ENCODE measurements at regions of chr14 and their contacts with region 1.

Region 1: DNA sequence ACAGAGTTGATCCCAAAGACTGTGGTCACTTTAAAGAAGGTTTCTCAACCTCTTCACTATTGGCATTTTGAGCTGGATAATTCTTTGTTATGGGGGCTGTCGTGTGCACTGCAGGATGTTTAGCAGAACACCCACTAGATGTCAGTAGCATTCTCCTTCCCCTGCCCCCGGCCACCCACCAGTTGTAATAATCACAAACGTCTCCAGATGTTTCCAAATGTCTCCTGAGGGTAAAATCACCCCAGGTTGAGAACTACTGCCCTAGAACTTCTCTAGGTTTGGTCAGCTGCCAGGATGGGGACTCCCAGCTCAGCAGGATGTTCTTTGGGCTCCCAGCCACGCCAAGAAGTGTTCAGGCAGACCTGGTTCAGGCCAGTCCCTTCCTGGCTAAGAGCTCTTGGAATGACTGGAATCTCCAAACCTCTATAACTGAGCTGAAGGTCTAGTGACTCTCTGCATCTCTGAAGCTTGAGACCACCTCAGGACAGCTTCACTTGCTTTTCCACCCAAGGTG is 12.5 kb upstream of the AJUBA start:
- DNase-seq: peak; percentile 86
- H3K4me3 ChIP-seq: no peak overlapping the region
- H3K27ac ChIP-seq: peak overlapping the region; percentile 22
- H3K4me1 ChIP-seq: peaks cover 37% of the 10 kb centered on the region
- H3K27me3 ChIP-seq: no peaks in the 10 kb centered on the region
- CTCF ChIP-seq: peak; percentile 88

Region 2: GRCh38 chr14:22491683-22492621 is 502.9 kb before region 1 on chr14:
- CTCF ChIA-PET with region 1: no interaction called
- POLR2A ChIA-PET with region 1: no interaction called
- intact Hi-C with region 1: no loop called
- DNase-seq: no peak
- H3K4me3 ChIP-seq: no peak overlapping the region
- H3K27ac ChIP-seq: no peak overlapping the region
- H3K4me1 ChIP-seq: peaks cover 52% of the 10 kb centered on the region
- H3K27me3 ChIP-seq: no peaks in the 10 kb centered on the region
- CTCF ChIP-seq: no peak

Region 3: DNA sequence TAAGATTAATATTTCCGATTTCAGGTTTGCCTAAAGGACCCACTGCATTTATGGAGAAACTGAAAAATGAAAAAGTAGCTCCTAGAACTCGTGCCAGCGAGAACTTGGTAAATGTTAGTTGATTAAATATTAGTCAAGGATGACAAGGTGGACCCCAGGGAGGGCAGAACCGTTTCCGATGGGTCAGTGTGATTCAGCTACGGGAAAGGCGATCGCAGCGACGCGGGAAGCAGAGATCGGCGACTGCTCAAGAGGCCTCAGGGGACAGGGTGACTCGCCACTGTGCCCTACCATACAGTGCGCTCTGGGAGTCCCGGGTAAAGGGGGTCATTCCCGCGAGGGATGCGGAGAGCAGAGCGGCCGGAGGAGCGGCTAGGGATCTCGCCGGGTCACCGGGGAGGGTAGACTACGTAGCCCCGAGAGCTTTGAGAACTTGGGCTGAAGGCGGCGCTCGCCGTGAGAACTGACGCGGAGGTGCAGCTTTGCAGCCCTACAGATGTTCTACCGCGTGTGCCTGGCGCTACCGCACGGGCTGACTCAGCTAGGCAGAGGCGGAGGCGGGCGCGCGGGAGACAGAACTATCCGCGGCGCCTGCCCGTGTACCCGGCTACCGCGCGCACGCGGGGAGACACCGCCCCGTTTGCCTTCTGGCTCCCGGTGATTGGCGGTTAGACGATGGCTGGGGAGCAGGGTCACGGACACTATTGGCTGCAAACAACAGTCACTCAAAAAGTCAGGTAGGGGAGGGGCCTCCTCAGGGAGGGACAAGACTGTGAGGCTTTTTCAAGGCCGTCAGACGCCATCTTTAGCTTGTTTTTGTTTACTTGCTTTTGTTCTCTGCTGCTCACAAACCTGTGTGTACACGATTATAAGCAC is 12.0 kb after region 1 on chr14:
- CTCF ChIA-PET with region 1: interaction called, 17 read pairs
- POLR2A ChIA-PET with region 1: interaction called, 5 read pairs
- intact Hi-C with region 1: no loop called
- DNase-seq: peak; percentile 99
- H3K4me3 ChIP-seq: peak overlapping the region; percentile 55
- H3K27ac ChIP-seq: peak overlapping the region; percentile 91
- H3K4me1 ChIP-seq: peaks cover 30% of the 10 kb centered on the region
- H3K27me3 ChIP-seq: no peaks in the 10 kb centered on the region
- CTCF ChIP-seq: 0 out of 2 replicates have a peak, but pooled peaks have one; percentile 32

Region 4: GRCh38 chr14:23025151-23025814 is 30.5 kb after region 1 on chr14:
- CTCF ChIA-PET with region 1: interaction called, 13 read pairs
- POLR2A ChIA-PET with region 1: interaction called, 3 read pairs
- intact Hi-C with region 1: no loop called
- DNase-seq: peak; percentile 98
- H3K4me3 ChIP-seq: no peak overlapping the region
- H3K27ac ChIP-seq: peak overlapping the region; percentile 95
- H3K4me1 ChIP-seq: peaks cover 80% of the 10 kb centered on the region
- H3K27me3 ChIP-seq: no peaks in the 10 kb centered on the region
- CTCF ChIP-seq: no peak

Region 5: DNA sequence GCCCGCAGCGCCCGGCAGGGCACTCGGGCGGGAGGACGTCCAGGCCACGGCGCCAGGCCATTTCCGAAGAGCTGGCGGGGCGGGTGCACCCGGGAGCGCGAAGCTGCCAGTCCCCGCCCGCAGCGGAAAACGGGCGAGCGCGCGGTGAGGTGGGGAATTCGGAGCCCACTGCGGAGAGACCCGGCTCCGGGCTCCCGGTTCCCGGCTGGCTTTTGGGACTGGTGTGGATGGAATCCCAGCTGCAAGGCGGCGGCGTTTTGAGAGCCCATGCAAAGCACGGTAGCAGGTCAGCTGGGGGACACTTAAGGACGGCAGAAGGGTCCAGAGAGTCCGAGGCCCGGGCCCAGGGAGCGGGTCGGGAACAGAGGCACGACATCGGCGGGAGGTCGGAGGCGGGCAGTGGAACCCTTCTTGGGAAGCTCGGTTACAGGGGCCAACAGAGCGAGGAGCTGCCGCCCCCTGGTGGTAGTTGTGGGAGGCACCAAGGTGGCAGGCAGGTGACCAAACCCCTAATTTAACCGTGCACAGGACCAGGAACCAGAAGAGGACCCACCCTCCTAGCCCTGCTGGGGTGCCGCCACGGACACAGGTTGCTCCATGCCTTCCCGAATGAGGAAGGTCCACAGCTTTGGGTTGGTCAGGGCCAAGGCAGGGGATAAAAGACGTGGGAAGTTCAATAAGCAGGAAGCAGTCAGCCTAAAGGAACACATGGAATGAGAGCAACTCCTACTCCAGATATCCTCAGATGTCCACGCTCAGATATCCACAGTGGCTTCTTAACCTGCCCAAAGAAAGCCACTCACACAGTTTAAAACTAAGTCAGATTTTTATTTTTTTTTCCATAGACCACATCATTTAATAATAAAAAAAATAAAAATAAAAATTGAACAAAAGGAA is 63.2 kb after region 1 on chr14:
- CTCF ChIA-PET with region 1: interaction called, 134 read pairs
- POLR2A ChIA-PET with region 1: no interaction called
- intact Hi-C with region 1: loop called (anchors 1 kb)
- DNase-seq: peak; percentile 93
- H3K4me3 ChIP-seq: peak overlapping the region; percentile 76
- H3K27ac ChIP-seq: peak overlapping the region; percentile 77
- H3K4me1 ChIP-seq: peaks cover 27% of the 10 kb centered on the region
- H3K27me3 ChIP-seq: no peaks in the 10 kb centered on the region
- CTCF ChIP-seq: peak; percentile 98

Region 6: DNA sequence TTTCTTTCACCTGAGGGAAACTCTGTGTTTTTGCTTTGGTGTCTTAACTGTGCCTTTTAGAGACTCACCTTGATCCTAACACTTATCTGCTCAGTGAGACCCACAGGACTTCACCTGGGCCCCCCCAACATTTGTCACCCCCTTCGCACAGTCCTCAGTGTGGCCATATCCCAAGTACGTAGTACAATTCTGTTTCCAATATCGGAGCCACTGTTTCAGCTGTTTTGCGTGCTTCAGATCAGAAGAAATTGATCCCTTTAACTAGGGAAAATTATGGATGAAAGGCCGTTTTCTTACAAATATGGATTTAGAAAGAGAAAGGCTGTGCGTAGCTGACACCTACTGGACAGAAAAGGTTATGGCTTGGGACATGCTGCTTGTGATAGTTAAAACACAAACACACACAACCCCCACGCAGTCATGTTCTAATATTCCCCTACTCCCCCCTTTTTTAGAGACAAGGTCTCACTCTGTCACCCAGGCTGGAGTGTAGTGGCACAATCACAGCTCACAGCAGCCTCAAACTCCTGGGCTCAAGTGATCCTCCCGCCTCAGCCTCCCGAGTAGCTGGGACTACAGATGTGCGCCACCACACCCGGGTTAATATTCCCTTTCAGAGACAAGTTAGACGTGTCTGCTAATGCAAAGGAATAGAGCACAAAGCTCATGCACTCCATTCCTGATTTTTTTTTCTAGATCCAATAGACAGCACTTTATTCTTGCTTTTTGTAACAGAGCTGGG is 192.3 kb after region 1 on chr14:
- CTCF ChIA-PET with region 1: no interaction called
- POLR2A ChIA-PET with region 1: no interaction called
- intact Hi-C with region 1: loop called (anchors 5 kb)
- DNase-seq: peak; percentile 76
- H3K4me3 ChIP-seq: no peak overlapping the region
- H3K27ac ChIP-seq: no peak overlapping the region
- H3K4me1 ChIP-seq: peaks cover 3% of the 10 kb centered on the region
- H3K27me3 ChIP-seq: no peaks in the 10 kb centered on the region
- CTCF ChIP-seq: peak; percentile 79

Measured in A673 (cell line).